Mucosa of descending colon (tissue), 3 donors: ENCODE measurements at regions of chr5 and their contacts with region 1.

Region 1: GRCh38 chr5:159156426-159157238 is 52.7 kb downstream of the RNF145 start:
- DNase-seq: peak in 1 of 3 donors; percentile 75
- ATAC-seq: peak; percentile 88
- H3K4me3 ChIP-seq: no peak overlapping the region
- H3K4me1 ChIP-seq: no peaks in the 10 kb centered on the region
- CTCF ChIP-seq: peak; percentile 68

Region 2: GRCh38 chr5:159262859-159263567 is 106.4 kb after region 1 on chr5 and contains the start of gene UBLCP1:
- intact Hi-C with region 1: loop called in 1 of 2 experiments (anchors 10 kb)
- DNase-seq: peak; percentile 87 to 88 (median 88)
- ATAC-seq: peak; percentile 96
- H3K4me3 ChIP-seq: peak within 1 kb of the TSS; percentile 93
- H3K4me1 ChIP-seq: peaks cover 8% of the 10 kb centered on the region
- CTCF ChIP-seq: no peak
- total RNA-seq, gene UBLCP1: 12.1 to 18.3 (median 17.7) TPM

Region 3: GRCh38 chr5:159316519-159317383 is 160.1 kb after region 1 on chr5:
- intact Hi-C with region 1: loop called in 1 of 2 experiments (anchors 10 kb)
- DNase-seq: peak in 1 of 3 donors; percentile 78
- ATAC-seq: peak; percentile 73
- H3K4me3 ChIP-seq: no peak overlapping the region
- H3K4me1 ChIP-seq: no peaks in the 10 kb centered on the region
- CTCF ChIP-seq: peak; percentile 39